ENCODE measurements at regions of chr12 and their contacts with region 1.

Region 1: DNA sequence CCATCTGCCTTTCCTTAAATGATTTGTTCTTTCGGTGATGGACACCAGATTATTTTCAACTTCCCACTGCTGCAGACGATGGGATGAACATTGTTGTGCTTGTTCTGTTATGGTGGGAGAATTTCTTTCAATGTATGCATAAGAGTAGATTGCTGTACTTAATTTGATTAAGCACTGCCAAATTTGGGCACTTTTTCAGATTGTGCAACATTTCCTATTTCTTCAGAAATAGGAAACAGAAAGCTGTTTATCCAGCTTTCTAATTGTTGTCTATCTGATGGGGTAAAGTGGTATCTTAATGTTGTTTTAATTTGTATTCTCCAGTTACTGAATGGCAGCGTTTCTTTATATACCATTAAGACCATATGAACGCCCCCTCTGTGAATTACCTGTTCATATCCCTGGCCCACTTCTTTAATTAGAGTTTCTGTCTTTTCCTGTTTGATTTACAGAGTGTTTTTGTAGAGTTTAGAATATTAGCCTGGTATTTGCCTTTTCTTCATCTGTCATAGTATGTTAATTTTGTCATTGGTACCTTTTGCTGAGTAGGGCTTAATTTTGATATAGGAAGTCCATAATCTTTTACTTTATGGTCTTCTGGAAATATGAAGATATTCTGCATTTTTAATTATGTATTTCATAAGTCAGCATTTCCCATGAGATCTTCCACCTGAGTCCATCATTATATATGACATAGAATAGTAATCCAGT is 59.6 kb downstream of the DIP2B start:
- DNase-seq: no peak
- H3K4me3 ChIP-seq: no peak overlapping the region
- H3K27ac ChIP-seq: peak overlapping the region; percentile 37; the same call in 1 of the 2 replicates
- H3K4me1 ChIP-seq: peaks cover 23% of the 10 kb centered on the region
- H3K27me3 ChIP-seq: no peaks in the 10 kb centered on the region
- CTCF ChIP-seq: no peak

Region 2: DNA sequence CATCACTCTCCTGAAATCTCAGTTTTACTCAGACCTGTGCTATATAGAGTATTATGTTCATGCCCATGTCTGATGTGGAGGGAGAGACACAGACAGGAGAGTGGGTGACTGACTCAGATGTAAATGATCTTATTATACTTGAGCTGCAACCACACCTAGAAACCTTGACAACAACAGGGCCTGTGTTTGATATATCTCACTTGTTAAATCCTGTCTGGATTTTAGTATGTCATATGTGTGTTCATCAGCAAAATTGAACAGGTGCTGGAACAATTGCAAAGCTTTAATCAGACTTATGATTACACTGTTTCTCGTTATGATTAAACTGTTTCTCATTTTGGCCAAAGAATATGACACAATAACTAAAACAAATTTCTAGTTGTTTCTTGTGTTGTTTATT is 21.9 kb before region 1 on chr12:
- CTCF ChIA-PET with region 1: interaction called, 10 read pairs
- POLR2A ChIA-PET with region 1: interaction called, 9 read pairs
- intact Hi-C with region 1: no loop called
- DNase-seq: peak; percentile 29 to 90
- H3K4me3 ChIP-seq: no peak overlapping the region
- H3K27ac ChIP-seq: peak overlapping the region; percentile 72
- H3K4me1 ChIP-seq: peaks cover 59% of the 10 kb centered on the region
- H3K27me3 ChIP-seq: no peaks in the 10 kb centered on the region
- CTCF ChIP-seq: no peak

Measured in PC-9 (cell line).